ENCODE measurements at regions of chr14 and their contacts with region 1.

Region 1: GRCh38 chr14:78848234-78848820 is 678.2 kb downstream of the NRXN3 start:
- H3K4me3 Mint-ChIP-seq: no peak overlapping the region
- H3K27ac Mint-ChIP-seq: no peak overlapping the region
- H3K4me1 Mint-ChIP-seq: no peaks in the 10 kb centered on the region
- H3K27me3 Mint-ChIP-seq: no peaks in the 10 kb centered on the region

Region 2: DNA sequence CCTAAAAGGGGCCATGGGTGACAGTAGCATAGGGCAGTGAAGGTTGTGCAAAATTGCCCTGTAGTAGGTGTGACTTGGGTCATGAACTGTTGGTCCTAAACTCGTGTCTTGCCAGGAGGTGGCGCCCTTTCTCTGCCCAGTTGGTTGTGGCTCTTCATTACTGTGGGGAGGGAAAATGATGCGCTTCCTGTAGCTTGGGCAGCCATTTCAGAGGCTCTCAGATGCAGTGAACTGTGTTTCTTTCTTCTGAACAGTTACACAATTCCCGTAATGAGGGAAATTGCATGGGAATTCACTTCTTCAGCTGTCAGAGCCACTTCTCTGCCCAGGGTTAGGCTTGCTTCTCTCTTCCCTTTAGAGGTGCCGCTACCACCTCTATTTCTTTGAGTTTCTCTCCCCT is 826.3 kb before region 1 on chr14:
- intact Hi-C with region 1: loop called (anchors 10 kb)
- H3K4me3 Mint-ChIP-seq: no peak overlapping the region
- H3K27ac Mint-ChIP-seq: no peak overlapping the region
- H3K4me1 Mint-ChIP-seq: no peaks in the 10 kb centered on the region
- H3K27me3 Mint-ChIP-seq: no peaks in the 10 kb centered on the region

Region 3: GRCh38 chr14:78790271-78790670 is 58.1 kb before region 1 on chr14:
- intact Hi-C with region 1: no loop called
- H3K4me3 Mint-ChIP-seq: no peak overlapping the region
- H3K27ac Mint-ChIP-seq: no peak overlapping the region
- H3K4me1 Mint-ChIP-seq: no peaks in the 10 kb centered on the region
- H3K27me3 Mint-ChIP-seq: no peaks in the 10 kb centered on the region

Region 4: DNA sequence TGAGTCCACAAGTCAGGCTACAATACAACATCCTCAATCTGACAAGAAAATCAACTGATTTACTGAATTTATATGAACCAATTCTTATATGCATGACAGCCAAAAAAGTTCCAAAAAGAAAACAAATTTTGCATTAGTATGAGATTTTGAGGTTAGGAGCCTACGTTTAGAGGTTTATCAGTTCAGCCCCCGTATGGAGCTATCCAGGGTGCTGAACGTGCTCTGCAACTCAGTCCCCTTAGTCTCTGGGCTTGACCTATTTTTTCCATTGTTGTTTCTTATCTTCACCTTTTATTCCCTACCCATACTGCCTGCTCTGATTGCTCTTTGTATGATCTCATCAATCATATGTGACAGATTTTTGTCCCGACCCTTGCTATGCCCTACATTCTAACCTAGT is 14.8 kb after region 1 on chr14:
- intact Hi-C with region 1: no loop called
- H3K4me3 Mint-ChIP-seq: no peak overlapping the region
- H3K27ac Mint-ChIP-seq: no peak overlapping the region
- H3K4me1 Mint-ChIP-seq: no peaks in the 10 kb centered on the region
- H3K27me3 Mint-ChIP-seq: no peaks in the 10 kb centered on the region